Vagina (tissue), 2 donors: ENCODE measurements at regions of chr20 and their contacts with region 1.

Region 1: GRCh38 chr20:23668477-23668951 is 20.3 kb downstream of the CST4 start:
- DNase-seq: peak; percentile 55 to 70
- H3K4me3 ChIP-seq: no peak overlapping the region
- H3K27ac ChIP-seq: no peak overlapping the region
- H3K4me1 ChIP-seq: no peaks in the 10 kb centered on the region
- H3K27me3 ChIP-seq: no peaks in the 10 kb centered on the region
- CTCF ChIP-seq: peak; percentile 32 to 68 (median 42)
- POLR2A ChIP-seq: no peak

Region 2: GRCh38 chr20:23441850-23442313 is 226.6 kb before region 1 on chr20:
- intact Hi-C with region 1: loop called (anchors 10 kb)
- DNase-seq: peak in 1 of 2 donors; percentile 74
- H3K4me3 ChIP-seq: no peak overlapping the region
- H3K27ac ChIP-seq: no peak overlapping the region
- H3K4me1 ChIP-seq: no peaks in the 10 kb centered on the region
- H3K27me3 ChIP-seq: no peaks in the 10 kb centered on the region
- CTCF ChIP-seq: peak; percentile 24 to 65 (median 59)
- POLR2A ChIP-seq: no peak